ENCODE measurements at regions of chr7 and their contacts with region 1.

Region 1: GRCh38 chr7:44999245-45000095 is 531 bp upstream of the CCM2 start:
- DNase-seq: peak; percentile 100
- H3K4me3 Mint-ChIP-seq: peak overlapping the region; percentile 88
- H3K27ac Mint-ChIP-seq: peak overlapping the region; percentile 94
- H3K4me1 Mint-ChIP-seq: peaks cover 56% of the 10 kb centered on the region
- H3K27me3 Mint-ChIP-seq: no peaks in the 10 kb centered on the region

Region 2: GRCh38 chr7:44581879-44582603 is 417.4 kb before region 1 on chr7 and contains the start of gene TMED4:
- CTCF ChIA-PET with region 1: no interaction called
- intact Hi-C with region 1: loop called (anchors 1 kb)
- DNase-seq: peak; percentile 100
- H3K4me3 Mint-ChIP-seq: peak within 1 kb of the TSS; percentile 90
- H3K27ac Mint-ChIP-seq: peak within 1 kb of the TSS; percentile 87
- H3K4me1 Mint-ChIP-seq: peaks cover 33% of the 10 kb centered on the region
- H3K27me3 Mint-ChIP-seq: peaks cover 2% of the 10 kb centered on the region
- total RNA-seq, gene TMED4: 77.3 to 81.8 TPM

Region 3: DNA sequence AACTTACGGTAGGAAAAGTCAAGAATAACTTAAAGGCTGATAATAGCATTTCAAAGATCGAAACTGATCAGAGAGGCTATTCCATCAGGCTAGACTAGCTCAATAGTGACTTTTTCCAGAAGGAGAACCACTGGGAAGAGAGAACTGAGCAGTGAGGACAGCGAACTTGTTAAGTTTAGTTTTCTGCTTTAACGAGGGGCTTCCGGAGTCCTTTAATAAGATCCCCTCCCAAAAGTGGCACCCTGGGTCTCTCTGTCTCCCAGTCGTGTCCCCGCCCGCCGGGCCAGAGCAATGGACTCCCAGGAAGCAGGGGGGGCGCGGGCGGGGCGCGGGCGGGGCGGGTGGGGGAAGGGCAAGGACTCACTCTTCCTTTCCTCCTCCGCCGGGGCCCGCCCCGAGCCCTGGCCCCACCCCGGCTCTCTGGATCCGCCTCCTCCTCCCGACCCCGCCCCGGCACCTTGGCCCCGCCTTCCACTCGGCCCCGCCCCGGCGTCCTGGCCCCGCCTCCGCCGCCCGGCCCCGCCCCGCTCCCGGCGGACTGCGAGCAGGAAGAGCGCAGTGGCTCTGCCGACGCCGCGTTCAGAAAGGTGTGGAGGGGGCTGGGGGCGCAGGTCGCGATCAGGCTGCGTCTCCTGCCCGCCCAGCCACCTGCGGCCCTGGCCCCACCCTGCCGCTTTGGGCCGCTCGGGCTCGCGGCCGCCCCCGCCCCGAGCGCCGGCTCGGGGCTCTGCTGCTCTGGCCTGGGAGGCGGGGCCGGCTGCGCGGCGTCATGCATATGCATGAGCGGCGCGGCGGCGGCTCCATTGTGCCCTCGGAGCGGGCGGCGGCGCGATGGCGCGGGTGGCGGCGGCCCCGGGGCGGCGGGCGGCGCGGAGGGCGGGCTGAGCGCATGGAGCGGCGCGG is 251.2 kb before region 1 on chr7 and contains the start of gene ZMIZ2:
- CTCF ChIA-PET with region 1: no interaction called
- intact Hi-C with region 1: loop called (anchors 1 kb)
- DNase-seq: peak; percentile 92
- H3K4me3 Mint-ChIP-seq: peak within 1 kb of the TSS; percentile 82
- H3K27ac Mint-ChIP-seq: peak within 1 kb of the TSS; percentile 88
- H3K4me1 Mint-ChIP-seq: peaks cover 39% of the 10 kb centered on the region
- H3K27me3 Mint-ChIP-seq: no peaks in the 10 kb centered on the region
- total RNA-seq, gene ZMIZ2: 83.1 to 86.5 TPM

Region 4: DNA sequence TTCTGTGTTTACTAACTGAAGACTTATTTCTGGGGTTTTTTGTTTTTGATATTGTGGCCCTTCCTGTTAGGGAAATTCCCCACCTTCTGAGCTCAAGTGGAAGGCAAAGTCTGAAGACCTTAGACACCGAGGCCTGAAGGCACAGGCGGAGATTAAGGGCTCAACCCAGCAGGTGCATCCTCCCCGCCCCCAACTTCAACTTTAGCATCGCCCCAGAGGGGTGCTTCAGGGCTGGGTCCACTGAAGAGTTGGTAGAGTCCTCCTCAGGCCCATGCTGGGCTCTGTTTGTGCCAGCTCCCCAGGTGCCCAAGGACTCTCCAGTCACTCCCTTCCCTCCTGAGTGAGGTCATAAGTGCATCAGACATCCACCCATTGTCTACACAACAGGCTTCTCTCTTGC is 212.4 kb before region 1 on chr7:
- CTCF ChIA-PET with region 1: no interaction called
- intact Hi-C with region 1: no loop called
- DNase-seq: no peak
- H3K4me3 Mint-ChIP-seq: no peak overlapping the region
- H3K27ac Mint-ChIP-seq: no peak overlapping the region
- H3K4me1 Mint-ChIP-seq: no peaks in the 10 kb centered on the region
- H3K27me3 Mint-ChIP-seq: no peaks in the 10 kb centered on the region

Region 5: DNA sequence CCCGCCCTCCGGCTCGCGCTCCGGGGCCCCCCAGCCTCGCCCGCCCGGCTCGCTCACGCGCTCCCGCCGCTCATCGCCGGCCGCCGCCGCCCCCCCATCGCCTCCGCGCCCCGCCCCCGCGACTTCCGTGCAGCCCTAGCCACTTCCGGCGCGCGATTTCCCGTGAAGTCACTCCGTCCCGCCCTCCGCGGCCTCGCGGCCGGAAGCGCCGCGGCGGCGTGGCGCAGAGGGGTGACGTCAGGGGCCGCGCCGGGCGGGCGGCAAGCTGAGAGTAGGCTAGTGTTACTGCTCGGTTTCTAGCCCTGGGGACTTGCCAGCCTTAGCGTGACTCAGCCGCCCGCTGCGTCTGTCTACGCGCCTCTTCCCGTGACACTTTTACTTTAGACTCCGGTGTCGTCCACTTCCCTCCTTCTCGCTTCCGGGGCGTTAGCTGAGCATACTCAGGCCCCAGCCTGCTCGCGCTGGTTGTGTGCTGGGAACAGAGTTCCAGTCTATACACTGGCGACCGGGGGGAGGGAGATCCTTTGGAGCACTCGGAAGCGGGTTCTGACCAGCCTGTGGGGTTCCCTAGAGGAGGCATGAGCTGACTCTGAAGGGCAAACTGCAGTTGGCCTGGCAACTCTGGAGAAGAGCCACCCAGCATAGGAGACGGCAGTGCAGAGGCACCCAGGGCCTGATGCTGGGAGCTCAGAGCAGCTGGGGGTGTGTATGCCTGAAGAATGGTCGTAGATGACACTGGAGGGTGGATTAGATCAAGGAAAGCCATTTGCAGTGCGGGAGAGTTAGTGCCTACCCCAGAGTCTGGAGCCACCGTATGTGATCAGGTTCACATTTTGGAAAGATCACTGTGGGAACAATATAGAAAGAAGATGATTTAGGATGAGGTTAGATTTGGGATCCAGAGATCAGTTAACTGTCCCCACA is 113.8 kb before region 1 on chr7 and contains the start of gene PURB:
- CTCF ChIA-PET with region 1: no interaction called
- intact Hi-C with region 1: loop called (anchors 1 kb)
- DNase-seq: peak; percentile 98
- H3K4me3 Mint-ChIP-seq: peak within 1 kb of the TSS; percentile 96
- H3K27ac Mint-ChIP-seq: peak within 1 kb of the TSS; percentile 100
- H3K4me1 Mint-ChIP-seq: peaks cover 46% of the 10 kb centered on the region
- H3K27me3 Mint-ChIP-seq: no peaks in the 10 kb centered on the region
- total RNA-seq, gene PURB: 12.9 to 13.1 TPM

Region 6: GRCh38 chr7:44973610-44974401 is 25.7 kb before region 1 on chr7:
- CTCF ChIA-PET with region 1: interaction called, 22 read pairs
- intact Hi-C with region 1: loop called (anchors 1 kb)
- DNase-seq: peak; percentile 69
- H3K4me3 Mint-ChIP-seq: no peak overlapping the region
- H3K27ac Mint-ChIP-seq: peak overlapping the region; percentile 83
- H3K4me1 Mint-ChIP-seq: peaks cover 36% of the 10 kb centered on the region
- H3K27me3 Mint-ChIP-seq: no peaks in the 10 kb centered on the region

Region 7: DNA sequence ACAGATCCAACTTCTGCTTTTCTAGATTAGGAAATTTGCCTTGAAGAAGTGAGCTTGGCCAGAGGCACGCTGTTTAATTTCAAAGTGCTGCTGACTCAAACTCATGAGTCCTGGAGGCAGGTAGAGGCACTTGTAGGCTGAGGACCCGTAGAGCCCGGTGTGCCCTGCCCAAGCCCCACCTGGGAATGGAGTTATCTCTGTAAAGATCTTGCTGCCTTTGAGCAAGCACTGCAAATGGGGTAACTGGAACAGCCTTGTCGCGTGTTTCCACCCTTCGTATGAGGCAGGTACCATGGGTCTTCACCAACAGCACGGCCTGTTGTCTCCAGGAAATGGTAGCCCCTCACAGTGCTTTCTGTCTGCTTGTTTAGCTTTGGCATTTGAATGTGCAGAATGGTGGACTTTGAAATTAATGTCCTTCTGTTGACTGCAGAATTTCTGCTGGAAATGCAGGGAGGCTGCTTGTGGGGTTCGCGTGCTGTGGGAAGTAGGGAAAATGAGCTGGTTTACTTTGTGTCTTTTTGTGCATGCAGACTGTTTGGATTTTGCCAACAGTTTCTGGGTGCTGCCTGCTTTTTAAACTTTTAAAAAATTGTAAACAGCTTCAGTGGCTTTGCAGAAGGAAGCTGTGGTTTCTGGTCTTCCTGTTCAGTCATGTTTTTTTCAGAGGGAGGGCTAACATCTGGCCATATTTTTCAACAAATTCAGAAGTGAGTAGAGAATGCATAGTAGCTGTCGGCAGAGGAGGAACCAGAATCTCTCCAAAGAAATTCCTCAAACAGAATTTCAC is 27.7 kb after region 1 on chr7:
- CTCF ChIA-PET with region 1: interaction called, 18 read pairs
- intact Hi-C with region 1: loop called (anchors 1 kb)
- DNase-seq: peak; percentile 29
- H3K4me3 Mint-ChIP-seq: peak overlapping the region; percentile 65
- H3K27ac Mint-ChIP-seq: peak overlapping the region; percentile 82
- H3K4me1 Mint-ChIP-seq: peaks cover 74% of the 10 kb centered on the region
- H3K27me3 Mint-ChIP-seq: no peaks in the 10 kb centered on the region

Region 8: DNA sequence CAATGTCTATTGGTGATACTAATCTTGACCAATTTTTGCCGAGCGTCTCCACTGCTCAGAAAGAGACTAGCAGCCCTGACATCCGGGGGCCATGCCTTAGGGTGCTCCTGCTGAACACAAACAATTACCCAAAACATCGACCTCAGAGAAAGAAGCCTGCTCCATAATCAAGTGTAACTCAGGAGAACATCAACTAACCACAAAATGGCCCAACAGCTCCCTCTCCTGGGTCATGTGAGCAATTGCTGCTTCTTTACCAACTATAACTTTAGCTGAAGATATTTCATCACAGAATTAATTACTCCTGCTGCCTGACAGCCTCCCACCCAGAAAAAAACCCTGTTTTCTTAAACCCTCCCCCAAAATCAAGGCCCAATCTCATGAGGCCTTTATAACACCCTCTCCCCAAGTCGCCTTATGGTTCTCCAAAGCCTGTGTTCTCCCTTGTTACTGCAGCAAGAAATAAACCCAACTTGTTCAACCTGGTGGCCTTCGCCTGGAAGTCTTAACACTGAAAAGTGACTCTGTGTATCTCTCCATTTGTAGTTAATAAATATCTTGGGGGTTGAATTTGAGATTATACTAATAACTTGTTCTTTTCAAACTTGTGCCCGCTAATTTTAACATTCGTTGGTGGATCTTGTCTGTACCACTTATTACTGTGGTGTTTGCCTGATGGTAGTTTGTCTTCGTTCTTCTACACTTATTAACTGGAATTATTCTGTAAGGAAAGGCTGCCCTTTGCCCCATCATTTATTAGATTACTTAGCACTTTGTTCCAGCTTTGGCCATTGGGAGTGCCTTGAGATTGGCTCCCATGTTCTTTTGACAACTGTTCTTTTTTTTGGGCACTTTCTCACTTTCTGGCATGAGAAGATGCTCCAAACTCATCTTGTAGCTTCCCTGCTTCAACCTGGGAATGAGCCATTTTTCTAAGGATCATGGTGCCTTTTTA is 136.9 kb after region 1 on chr7:
- CTCF ChIA-PET with region 1: interaction called, 14 read pairs
- intact Hi-C with region 1: loop called (anchors 1 kb)
- DNase-seq: peak; percentile 87
- H3K4me3 Mint-ChIP-seq: no peak overlapping the region
- H3K27ac Mint-ChIP-seq: no peak overlapping the region
- H3K4me1 Mint-ChIP-seq: peaks cover 7% of the 10 kb centered on the region
- H3K27me3 Mint-ChIP-seq: no peaks in the 10 kb centered on the region

Region 9: DNA sequence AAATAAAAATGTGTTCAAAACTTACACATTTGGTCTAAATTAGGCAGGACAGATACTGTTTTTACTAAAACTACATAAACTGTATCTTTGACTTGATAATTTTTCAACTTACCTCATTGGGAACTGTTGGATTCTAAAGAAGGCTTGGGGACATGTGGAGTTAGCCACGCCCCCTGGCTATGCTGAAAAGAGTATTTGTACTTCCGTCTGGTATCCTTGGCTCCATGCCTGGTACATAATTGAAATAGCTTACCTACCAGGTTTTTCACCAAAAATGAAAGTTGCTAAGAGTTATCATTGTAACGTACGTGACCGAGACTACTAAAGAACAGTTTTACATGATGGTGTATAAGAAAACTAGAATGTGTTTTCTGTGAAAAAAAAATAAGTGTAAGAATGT is 1526.4 kb after region 1 on chr7:
- CTCF ChIA-PET with region 1: no interaction called
- intact Hi-C with region 1: no loop called
- DNase-seq: no peak
- H3K4me3 Mint-ChIP-seq: no peak overlapping the region
- H3K27ac Mint-ChIP-seq: no peak overlapping the region
- H3K4me1 Mint-ChIP-seq: no peaks in the 10 kb centered on the region
- H3K27me3 Mint-ChIP-seq: no peaks in the 10 kb centered on the region

Measured in activated naive CD4-positive, alpha-beta T cell treated with anti-CD3 and anti-CD28 coated beads for 36 hours (primary cell).